PC-9 (cell line): ENCODE measurements at regions of chr22 and their contacts with region 1.

Region 1: DNA sequence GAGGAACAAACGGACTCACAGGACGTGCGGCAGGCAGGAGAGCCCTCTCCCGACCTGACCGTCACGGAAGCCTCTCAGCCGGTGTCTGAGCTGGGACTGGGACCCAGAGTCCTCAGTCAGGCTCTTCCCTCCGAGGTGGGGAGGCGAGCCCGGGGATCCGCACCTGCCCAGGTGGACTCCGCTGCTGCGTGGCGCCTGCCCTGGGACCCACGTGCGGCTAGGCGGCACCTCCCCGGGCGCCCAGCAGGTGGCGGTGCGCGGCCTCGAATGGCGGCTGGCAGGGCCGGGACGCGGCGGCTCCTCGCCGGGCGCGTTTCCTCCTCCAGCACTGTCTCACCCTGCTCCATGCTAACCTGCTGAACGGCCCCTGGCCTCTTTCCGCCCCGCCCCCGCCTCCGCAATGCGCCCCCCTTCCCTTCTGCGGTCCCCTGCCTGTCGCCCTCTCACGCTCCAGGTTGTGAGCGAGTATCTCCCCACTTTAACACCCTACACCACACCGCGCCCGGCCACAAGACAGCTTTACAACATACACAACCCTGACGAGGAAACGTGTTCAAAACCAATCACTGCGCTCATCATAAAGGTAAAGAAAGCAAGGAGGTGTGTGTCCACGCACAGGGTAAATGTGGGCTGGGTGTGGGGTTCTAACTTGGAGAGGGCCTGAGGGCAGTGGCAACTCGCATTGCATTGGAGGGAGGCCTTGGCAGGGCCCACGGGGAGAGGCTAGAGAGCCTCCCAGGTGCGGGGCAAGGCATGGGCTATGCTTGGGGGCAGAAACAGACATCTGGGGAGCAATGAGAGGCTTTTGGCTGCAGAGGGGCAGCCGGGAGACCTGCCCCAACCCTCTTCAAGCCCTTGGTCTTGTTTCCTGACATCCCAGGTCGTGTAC is 25.9 kb upstream of the ATXN10 start:
- DNase-seq: peak; percentile 37 to 85
- H3K4me3 ChIP-seq: no peak overlapping the region
- H3K27ac ChIP-seq: no peak overlapping the region
- H3K4me1 ChIP-seq: peaks cover 33% of the 10 kb centered on the region
- H3K27me3 ChIP-seq: no peaks in the 10 kb centered on the region
- CTCF ChIP-seq: peak; percentile 88

Region 2: GRCh38 chr22:44181033-44181911 is 1464.5 kb before region 1 on chr22:
- CTCF ChIA-PET with region 1: no interaction called
- POLR2A ChIA-PET with region 1: no interaction called
- intact Hi-C with region 1: no loop called
- DNase-seq: no peak
- H3K4me3 ChIP-seq: no peak overlapping the region
- H3K27ac ChIP-seq: no peak overlapping the region
- H3K4me1 ChIP-seq: no peaks in the 10 kb centered on the region
- H3K27me3 ChIP-seq: peaks cover 60% of the 10 kb centered on the region; the same call in 1 of the 2 replicates
- CTCF ChIP-seq: no peak

Region 3: GRCh38 chr22:45169576-45170466 is 475.9 kb before region 1 on chr22:
- CTCF ChIA-PET with region 1: no interaction called
- POLR2A ChIA-PET with region 1: no interaction called
- intact Hi-C with region 1: no loop called
- DNase-seq: no peak
- H3K4me3 ChIP-seq: no peak overlapping the region
- H3K27ac ChIP-seq: 0 out of 2 replicates have a peak overlapping the region, but pooled peaks have one; percentile 20
- H3K4me1 ChIP-seq: peaks cover 18% of the 10 kb centered on the region
- H3K27me3 ChIP-seq: no peaks in the 10 kb centered on the region
- CTCF ChIP-seq: no peak

Region 4: DNA sequence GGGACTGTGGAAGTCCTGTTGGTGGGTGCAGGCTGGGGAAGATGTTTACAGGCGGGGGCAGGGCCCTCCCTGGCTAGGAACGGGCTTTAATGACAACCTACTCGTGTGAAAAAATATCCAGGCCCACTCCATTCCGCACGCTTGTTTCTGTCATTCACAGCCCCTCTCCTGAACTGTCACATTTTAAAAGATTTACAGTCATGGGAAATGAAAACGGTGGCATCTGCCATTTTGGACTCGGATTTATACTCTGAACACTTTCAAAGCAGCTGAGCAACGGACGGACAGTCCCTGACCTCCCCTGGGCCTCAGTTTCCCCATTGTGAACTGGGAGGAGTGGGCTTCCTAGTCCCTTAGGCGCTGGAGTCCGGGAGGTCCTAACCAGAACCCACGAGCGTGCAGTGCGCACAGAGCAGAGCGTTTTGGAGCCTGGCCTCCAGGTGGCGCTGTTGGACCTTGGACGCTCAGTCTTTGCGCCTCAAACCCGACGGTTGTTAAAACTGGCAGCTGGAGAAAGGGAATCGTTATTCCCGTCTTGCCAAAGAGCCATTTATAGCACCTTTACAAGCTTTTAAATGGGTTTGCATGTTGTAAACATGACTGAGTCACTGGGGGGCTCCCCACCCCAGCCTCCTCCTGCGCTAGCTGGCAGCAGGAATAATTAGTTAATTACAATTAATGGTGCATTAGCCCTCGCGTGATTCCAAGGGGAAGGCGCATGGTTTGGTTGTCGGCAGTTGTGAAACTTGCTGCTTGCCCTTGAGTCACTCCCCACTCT is 67.8 kb before region 1 on chr22:
- CTCF ChIA-PET with region 1: no interaction called
- POLR2A ChIA-PET with region 1: no interaction called
- intact Hi-C with region 1: loop called (anchors 1 kb)
- DNase-seq: peak; percentile 63 to 79
- H3K4me3 ChIP-seq: no peak overlapping the region
- H3K27ac ChIP-seq: no peak overlapping the region
- H3K4me1 ChIP-seq: peaks cover under 1% of the 10 kb centered on the region; the same call in 1 of the 2 replicates
- H3K27me3 ChIP-seq: no peaks in the 10 kb centered on the region
- CTCF ChIP-seq: peak; percentile 99

Region 5: DNA sequence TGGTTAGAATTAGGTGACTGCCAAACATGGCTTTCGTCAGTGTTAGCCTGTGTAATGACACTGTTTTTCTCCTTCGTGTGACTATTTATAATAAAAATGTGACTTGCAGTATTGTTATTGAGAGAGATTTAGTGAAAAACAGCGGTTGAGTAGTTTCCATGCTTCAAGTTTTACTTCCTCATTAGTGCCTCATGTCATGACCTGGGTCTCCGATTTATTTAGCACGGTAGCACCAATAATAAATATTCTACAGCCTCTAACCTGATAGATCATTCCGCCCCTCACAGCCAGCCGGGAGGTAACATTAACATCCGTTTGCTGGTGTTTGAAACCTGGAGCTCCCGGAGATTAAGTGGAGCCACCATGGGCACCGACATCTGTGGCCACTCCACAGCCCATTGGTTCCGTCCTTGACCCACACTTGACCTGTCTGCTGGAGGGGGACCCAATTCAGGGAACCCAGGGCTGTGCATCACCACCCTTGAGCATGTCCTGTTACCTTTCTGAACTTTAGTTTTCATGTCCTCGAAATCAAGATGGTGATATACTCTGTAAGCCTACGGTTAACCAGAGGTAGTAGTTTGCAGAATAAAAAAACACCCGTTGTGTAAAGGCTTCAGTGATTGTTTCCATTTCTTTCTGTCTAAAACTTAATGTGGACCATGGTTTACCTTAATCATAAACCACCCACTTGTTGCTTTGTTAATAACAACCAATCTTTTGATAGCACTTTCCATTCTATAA is 130.0 kb after region 1 on chr22:
- CTCF ChIA-PET with region 1: no interaction called
- POLR2A ChIA-PET with region 1: no interaction called
- intact Hi-C with region 1: loop called (anchors 1 kb)
- DNase-seq: no peak
- H3K4me3 ChIP-seq: no peak overlapping the region
- H3K27ac ChIP-seq: peak overlapping the region; percentile 82
- H3K4me1 ChIP-seq: peaks cover 45% of the 10 kb centered on the region
- H3K27me3 ChIP-seq: no peaks in the 10 kb centered on the region
- CTCF ChIP-seq: no peak

Region 6: GRCh38 chr22:45903355-45904149 is 257.8 kb after region 1 on chr22:
- CTCF ChIA-PET with region 1: no interaction called
- POLR2A ChIA-PET with region 1: interaction called, 35 read pairs
- intact Hi-C with region 1: no loop called
- DNase-seq: peak; percentile 72 to 87
- H3K4me3 ChIP-seq: peak overlapping the region; percentile 37; the same call in 1 of the 2 replicates
- H3K27ac ChIP-seq: no peak overlapping the region
- H3K4me1 ChIP-seq: peaks cover 23% of the 10 kb centered on the region
- H3K27me3 ChIP-seq: no peaks in the 10 kb centered on the region
- CTCF ChIP-seq: no peak

Region 7: GRCh38 chr22:46116491-46116958 is 470.8 kb after region 1 on chr22:
- CTCF ChIA-PET with region 1: no interaction called
- POLR2A ChIA-PET with region 1: no interaction called
- intact Hi-C with region 1: loop called (anchors 10 kb)
- DNase-seq: peak; percentile 72 to 91
- H3K4me3 ChIP-seq: no peak overlapping the region
- H3K27ac ChIP-seq: no peak overlapping the region
- H3K4me1 ChIP-seq: no peaks in the 10 kb centered on the region
- H3K27me3 ChIP-seq: no peaks in the 10 kb centered on the region
- CTCF ChIP-seq: peak; percentile 96

Region 8: GRCh38 chr22:46748908-46749675 is 1103.3 kb after region 1 on chr22:
- CTCF ChIA-PET with region 1: no interaction called
- POLR2A ChIA-PET with region 1: no interaction called
- intact Hi-C with region 1: no loop called
- DNase-seq: peak; percentile 83 to 99
- H3K4me3 ChIP-seq: peak overlapping the region; percentile 36; the same call in 1 of the 2 replicates
- H3K27ac ChIP-seq: peak overlapping the region; percentile 79
- H3K4me1 ChIP-seq: peaks cover 66% of the 10 kb centered on the region
- H3K27me3 ChIP-seq: no peaks in the 10 kb centered on the region
- CTCF ChIP-seq: no peak